Mammary epithelial cell (primary cell): ENCODE measurements at regions of chr14 and their contacts with region 1.

Region 1: GRCh38 chr14:71753126-71753830 is 179.0 kb upstream of the RGS6 start:
- DNase-seq: peak; percentile 68
- H3K4me3 ChIP-seq: no peak overlapping the region
- H3K27ac ChIP-seq: no peak overlapping the region
- H3K4me1 ChIP-seq: peaks cover 11% of the 10 kb centered on the region
- H3K27me3 ChIP-seq: no peaks in the 10 kb centered on the region
- CTCF ChIP-seq: peak; percentile 82 to 96

Region 2: DNA sequence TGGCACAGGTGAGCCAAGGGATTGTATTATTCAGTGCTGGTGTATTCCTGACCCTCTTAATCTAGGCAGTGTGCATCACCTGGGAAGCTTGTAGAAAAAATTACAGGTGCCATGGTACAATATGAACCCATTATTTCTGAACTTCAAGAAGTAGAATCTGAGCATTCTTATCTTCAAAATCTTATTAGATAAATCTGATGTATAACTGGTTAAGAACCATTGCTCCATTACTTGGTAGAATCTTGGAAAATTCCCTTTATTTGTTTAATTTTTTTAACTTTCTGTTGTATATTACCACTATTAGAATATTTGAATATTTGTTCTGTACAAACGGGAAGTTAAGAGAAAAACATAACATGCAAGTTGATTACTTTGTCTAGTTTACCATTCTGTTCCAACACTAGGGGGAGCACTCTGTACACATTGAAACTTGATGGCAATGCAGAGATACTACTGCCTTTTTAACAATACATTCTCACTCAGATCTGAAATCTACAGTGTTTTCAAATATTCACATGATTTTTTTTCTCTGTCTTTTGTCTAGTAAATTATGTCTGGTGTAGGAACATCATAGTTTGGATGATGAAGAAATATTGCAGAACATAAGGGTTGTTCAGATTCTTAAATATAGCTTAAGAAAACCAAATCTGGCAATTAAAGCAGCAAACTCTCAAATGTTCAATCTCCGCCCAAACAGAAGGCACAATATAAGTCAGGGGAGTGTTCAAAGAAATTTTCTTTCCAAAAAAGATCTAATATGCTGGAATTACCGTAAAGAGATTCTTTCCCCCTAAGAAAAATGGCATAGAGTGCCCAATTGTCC is 649.4 kb before region 1 on chr14:
- CTCF ChIA-PET with region 1: no interaction called
- dilution Hi-C with region 1: no loop called
- in situ Hi-C with region 1: no loop called
- intact Hi-C with region 1: loop called (anchors 1 kb)
- DNase-seq: peak; percentile 42
- H3K4me3 ChIP-seq: no peak overlapping the region
- H3K27ac ChIP-seq: no peak overlapping the region
- H3K4me1 ChIP-seq: no peaks in the 10 kb centered on the region
- H3K27me3 ChIP-seq: no peaks in the 10 kb centered on the region
- CTCF ChIP-seq: peak; percentile 82 to 86

Region 3: DNA sequence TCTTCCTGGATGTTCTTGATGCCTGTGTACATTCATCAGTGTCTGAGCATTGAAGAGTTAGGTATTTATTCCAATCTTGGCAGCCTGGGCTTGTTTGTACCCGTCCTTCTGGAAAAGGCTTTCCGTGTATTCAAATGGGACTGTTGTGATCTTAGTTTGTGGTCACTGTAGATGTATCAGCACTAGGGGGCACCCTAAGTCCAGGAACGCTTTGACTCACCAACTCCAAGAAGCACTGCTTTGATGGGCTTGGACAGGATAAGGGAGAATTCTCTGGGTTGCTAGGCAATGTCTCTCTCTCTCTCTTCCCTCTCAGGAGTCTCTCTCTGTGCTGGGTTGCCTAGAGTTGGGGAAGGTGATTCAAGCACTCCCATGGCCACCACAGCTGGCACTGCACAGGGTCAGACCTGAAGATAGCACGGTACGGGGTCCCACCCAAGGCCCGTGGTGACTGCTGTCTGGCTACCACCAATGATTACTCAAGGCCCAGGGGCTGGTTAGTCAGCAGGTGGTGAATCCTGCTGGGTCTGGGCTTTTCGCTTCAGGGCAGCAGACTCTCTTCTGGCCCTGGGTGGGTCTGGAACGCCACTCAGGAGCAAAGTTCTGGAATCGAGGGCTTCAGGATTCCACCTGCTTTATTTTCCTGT is 32.2 kb before region 1 on chr14:
- CTCF ChIA-PET with region 1: no interaction called
- dilution Hi-C with region 1: no loop called
- in situ Hi-C with region 1: no loop called
- intact Hi-C with region 1: loop called (anchors 1 kb)
- DNase-seq: peak; percentile 86
- H3K4me3 ChIP-seq: no peak overlapping the region
- H3K27ac ChIP-seq: no peak overlapping the region
- H3K4me1 ChIP-seq: peaks cover 19% of the 10 kb centered on the region
- H3K27me3 ChIP-seq: no peaks in the 10 kb centered on the region
- CTCF ChIP-seq: peak; percentile 48 to 79